ENCODE measurements at regions of chr11 and their contacts with region 1.

Region 1: GRCh38 chr11:1348796-1349326 is 39.4 kb upstream of the TOLLIP start:
- DNase-seq: no peak
- H3K4me3 Mint-ChIP-seq: no peak overlapping the region
- H3K27ac Mint-ChIP-seq: no peak overlapping the region
- H3K4me1 Mint-ChIP-seq: no peaks in the 10 kb centered on the region
- H3K27me3 Mint-ChIP-seq: no peaks in the 10 kb centered on the region

Region 2: GRCh38 chr11:1121813-1122663 is 226.8 kb before region 1 on chr11:
- CTCF ChIA-PET with region 1: no interaction called
- intact Hi-C with region 1: no loop called
- DNase-seq: peak; percentile 2
- H3K4me3 Mint-ChIP-seq: no peak overlapping the region
- H3K27ac Mint-ChIP-seq: no peak overlapping the region
- H3K4me1 Mint-ChIP-seq: no peaks in the 10 kb centered on the region
- H3K27me3 Mint-ChIP-seq: peaks cover 4% of the 10 kb centered on the region

Region 3: DNA sequence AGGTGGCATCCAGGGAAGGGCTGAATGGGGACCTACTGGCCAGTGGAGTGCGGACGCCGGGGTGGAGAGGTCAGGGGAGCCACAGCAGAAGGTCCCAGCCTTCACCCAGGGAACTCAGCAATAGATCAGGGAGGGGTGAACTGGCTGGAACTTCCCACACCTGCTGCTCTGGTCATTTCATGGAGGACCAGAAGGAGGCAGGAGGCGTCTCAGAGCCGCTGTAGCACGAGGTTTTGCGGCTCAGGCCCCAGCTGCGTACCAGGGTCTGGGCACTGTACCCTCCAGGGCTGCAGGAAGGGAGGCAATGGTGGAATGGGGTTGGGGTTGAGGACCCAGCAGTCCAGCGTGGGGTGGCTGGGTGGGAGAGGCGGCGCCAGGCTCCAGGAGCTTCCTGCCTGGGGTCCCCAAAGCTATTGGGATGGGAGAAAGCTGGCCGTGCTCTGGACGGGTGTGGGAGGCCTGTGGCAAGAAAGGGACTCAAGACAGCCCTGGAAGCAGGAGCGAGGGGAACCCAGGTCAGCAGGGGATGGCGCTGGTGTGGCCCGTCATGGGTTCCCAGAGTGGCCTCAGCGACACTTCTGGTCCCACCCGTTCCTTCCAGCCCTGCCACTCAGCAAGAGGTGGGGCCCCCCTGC is 20.6 kb after region 1 on chr11:
- CTCF ChIA-PET with region 1: no interaction called
- intact Hi-C with region 1: loop called (anchors 1 kb)
- DNase-seq: no peak
- H3K4me3 Mint-ChIP-seq: no peak overlapping the region
- H3K27ac Mint-ChIP-seq: no peak overlapping the region
- H3K4me1 Mint-ChIP-seq: no peaks in the 10 kb centered on the region
- H3K27me3 Mint-ChIP-seq: no peaks in the 10 kb centered on the region

Measured in activated naive CD4-positive, alpha-beta T cell treated with anti-CD3 and anti-CD28 coated beads for 36 hours (primary cell).